ENCODE measurements at regions of chr2 and their contacts with region 1.

Region 1: GRCh38 chr2:109128048-109128465 is 948 bp upstream of the SH3RF3 start:
- DNase-seq: peak; percentile 87 to 94 (median 93)
- ATAC-seq: peak; percentile 89 to 91
- H3K4me3 ChIP-seq: peak overlapping the region; percentile 68
- H3K27ac ChIP-seq: peak overlapping the region; percentile 5
- H3K4me1 ChIP-seq: no peaks in the 10 kb centered on the region
- H3K27me3 ChIP-seq: no peaks in the 10 kb centered on the region

Region 2: DNA sequence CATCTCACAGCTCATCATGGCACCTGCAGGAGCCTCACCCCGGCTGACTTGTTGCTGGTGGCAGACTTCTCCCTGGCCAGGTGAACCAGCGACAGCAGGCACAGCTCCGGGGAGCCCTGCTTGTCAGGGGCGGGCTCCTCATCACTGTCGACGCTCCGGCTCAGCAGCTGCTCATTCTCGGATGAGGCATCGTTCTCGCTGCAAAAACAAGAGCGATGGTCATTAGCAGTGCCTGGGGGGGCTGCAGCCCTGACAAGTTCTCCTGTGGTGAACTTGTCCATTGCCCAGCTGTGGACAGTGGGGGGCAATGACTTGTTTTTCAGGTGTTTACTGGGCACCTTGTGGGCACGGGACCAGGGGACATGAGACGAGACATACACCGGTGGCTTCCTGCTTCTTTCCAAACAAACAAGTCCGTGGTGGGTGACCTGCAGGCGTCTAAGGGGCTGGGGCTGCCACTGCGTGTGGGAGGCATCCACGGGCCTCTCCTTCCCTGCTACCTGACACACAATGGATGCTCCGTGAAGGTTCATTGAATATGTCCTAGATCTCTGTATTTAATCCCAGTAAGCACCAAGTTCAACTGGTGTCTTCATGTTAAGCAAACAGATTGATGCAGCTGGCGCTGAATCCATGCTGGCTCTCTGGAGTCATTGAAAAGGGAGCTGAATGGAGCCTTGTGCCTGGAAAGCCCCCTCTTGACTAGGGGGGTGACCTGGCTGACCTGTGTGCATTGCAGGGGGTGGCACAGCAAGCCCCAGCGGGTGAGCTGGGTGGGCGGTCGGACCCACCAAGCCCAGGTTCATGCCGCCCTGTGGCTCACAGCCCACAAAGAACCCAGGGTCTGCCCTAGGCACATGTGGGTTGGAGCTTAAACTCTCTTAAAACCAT is 220.0 kb before region 1 on chr2:
- intact Hi-C with region 1: no loop called
- DNase-seq: peak in 1 of 3 donors; percentile 39
- ATAC-seq: no peak
- H3K4me3 ChIP-seq: no peak overlapping the region
- H3K27ac ChIP-seq: no peak overlapping the region
- H3K4me1 ChIP-seq: no peaks in the 10 kb centered on the region
- H3K27me3 ChIP-seq: no peaks in the 10 kb centered on the region

Region 3: DNA sequence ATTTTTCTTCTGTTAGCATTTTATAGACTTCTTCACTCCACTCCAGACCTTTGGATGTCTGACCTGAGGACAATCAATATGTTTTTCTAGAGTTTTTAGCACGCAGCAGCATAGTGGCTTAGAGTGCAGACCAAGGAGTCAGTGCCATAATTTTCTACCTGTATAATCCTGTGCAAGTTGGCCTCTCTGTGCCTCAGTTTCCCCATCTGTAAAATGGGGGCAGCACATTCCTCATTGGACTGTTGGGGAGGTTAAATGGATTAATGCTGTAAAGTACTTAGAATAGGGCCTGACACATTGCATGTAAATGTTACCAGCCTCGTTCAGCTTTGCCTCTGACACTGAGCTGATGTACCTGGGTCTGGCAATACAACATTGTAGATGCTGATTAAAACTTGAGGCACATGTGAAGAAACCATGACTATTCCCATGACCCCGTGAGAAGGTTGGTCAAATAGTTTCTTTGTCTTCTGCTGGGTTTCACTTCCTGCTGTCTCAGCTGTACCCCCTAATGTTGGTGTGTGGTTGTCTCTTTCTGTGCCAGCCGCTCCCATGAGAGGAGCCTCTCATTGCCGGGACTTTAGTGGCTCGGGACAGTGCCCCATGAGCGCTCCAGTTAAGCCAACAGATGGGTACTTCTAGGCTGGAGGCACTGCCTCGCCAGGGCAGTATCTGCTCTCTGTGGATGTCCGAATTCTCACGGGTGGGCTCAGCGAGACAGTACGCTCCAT is 126.3 kb after region 1 on chr2:
- intact Hi-C with region 1: loop called in 1 of 4 experiments (anchors 10 kb)
- DNase-seq: no peak
- ATAC-seq: no peak
- H3K4me3 ChIP-seq: no peak overlapping the region
- H3K27ac ChIP-seq: no peak overlapping the region
- H3K4me1 ChIP-seq: peaks cover 28% of the 10 kb centered on the region
- H3K27me3 ChIP-seq: no peaks in the 10 kb centered on the region

Region 4: DNA sequence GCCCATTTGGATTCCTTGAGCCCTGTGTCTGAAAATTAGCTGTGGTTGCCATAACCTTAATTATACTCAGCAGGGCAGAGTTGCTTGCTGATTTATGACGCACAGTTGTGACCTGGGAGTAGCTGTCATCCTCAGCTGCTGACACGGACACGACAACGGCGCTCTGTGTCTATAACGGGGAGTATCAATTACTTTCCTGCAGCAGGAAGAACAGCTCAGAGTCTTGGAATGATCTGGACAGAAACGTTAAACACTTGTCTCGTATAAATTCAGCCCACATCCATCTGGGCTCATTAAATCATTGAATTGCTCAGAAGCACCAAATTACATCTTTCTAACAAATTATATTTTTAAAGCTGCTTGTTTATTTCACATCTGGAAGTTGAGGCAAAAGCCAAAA is 369.4 kb after region 1 on chr2:
- intact Hi-C with region 1: loop called in 1 of 4 experiments (anchors 5 kb)
- DNase-seq: peak in 1 of 3 donors; percentile 21
- ATAC-seq: no peak
- H3K4me3 ChIP-seq: no peak overlapping the region
- H3K27ac ChIP-seq: no peak overlapping the region
- H3K4me1 ChIP-seq: peaks cover 3% of the 10 kb centered on the region
- H3K27me3 ChIP-seq: no peaks in the 10 kb centered on the region